ENCODE measurements at regions of chr1 and their contacts with region 1.

Region 1: DNA sequence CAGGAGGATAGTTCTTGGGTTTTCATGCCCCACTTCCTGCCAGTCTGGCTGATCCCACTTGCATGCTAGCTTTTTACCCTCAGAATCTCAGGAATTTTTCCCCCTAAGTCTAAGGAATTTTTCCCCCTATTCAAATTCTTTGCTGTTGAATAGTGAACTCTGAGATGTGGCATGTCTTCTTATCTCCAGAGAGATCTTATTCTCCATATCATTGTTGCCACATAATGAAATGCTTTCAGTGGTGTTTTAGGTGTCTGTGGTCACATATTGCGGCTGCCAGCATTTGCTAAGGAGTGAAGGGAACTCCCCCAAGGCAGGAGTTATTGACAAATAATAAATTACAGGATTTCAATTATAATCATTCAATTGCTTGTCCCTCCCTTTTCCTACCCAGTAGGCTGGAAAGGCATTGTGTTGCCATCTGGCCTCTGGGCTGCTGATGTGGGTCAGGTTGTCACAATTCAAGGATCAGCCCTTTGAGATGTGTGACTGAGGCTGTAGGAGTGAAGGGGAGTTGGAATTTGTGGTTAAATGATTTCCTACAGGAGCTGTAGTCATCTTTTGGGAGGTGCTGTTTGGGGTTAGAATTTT is 3.9 kb upstream of the FLG start:
- DNase-seq: no peak
- H3K4me3 ChIP-seq: no peak overlapping the region
- CTCF ChIP-seq: no peak
- POLR2A ChIP-seq: no peak

Region 2: GRCh38 chr1:153946622-153947241 is 1617.8 kb after region 1 on chr1 and contains the start of gene DENND4B:
- intact Hi-C with region 1: no loop called
- DNase-seq: peak; percentile 66 to 95
- H3K4me3 ChIP-seq: peak within 1 kb of the TSS; percentile 91
- CTCF ChIP-seq: peak in 1 of 3 donors; percentile 90
- POLR2A ChIP-seq: no peak
- total RNA-seq, gene DENND4B: 18.4 to 31.1 (median 20.5) TPM

Region 3: DNA sequence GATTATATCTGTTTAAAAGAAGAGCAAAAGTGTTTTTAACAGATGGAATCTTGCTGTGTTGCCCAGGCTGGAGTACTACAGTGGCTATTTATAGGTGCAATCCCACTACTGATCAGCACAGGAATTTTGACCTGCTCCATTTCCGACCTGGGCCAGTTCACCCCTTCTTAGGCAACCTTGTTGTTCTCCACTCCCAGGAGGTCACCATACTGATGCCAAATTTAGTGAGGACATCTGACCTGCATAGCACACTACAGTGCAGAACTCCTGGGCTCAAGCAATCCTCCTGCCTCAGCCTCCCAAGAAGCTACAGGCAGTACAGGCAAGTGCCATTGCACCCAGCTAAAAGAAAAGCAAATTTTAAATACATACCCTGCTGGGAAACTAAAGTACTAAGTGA is 1837.3 kb after region 1 on chr1:
- intact Hi-C with region 1: loop called (anchors 5 kb)
- DNase-seq: no peak
- H3K4me3 ChIP-seq: no peak overlapping the region
- CTCF ChIP-seq: no peak
- POLR2A ChIP-seq: no peak

Measured in lower leg skin (tissue), 4 donors.